ENCODE measurements at regions of chr4 and their contacts with region 1.

Region 1: GRCh38 chr4:48388525-48389154 is 47.3 kb downstream of the SLAIN2 start:
- DNase-seq: no peak
- ATAC-seq: no peak
- H3K4me3 Mint-ChIP-seq: no peak overlapping the region
- H3K27ac Mint-ChIP-seq: no peak overlapping the region
- H3K4me1 Mint-ChIP-seq: no peaks in the 10 kb centered on the region
- H3K27me3 Mint-ChIP-seq: no peaks in the 10 kb centered on the region
- CTCF ChIP-seq: no peak

Region 2: GRCh38 chr4:48360285-48361010 is 28.2 kb before region 1 on chr4:
- CTCF ChIA-PET with region 1: no interaction called
- POLR2A ChIA-PET with region 1: no interaction called
- intact Hi-C with region 1: loop called (anchors 1 kb)
- DNase-seq: no peak
- ATAC-seq: no peak
- H3K4me3 Mint-ChIP-seq: no peak overlapping the region
- H3K27ac Mint-ChIP-seq: no peak overlapping the region
- H3K4me1 Mint-ChIP-seq: peaks cover 14% of the 10 kb centered on the region
- H3K27me3 Mint-ChIP-seq: no peaks in the 10 kb centered on the region
- CTCF ChIP-seq: no peak